Activated CD8-positive, alpha-beta memory T cell treated with anti-CD3 and anti-CD28 coated beads, Interleukin-2, amount 10 ng/mL, durations not matched to agents 7 days and 5 days (primary cell): ENCODE measurements at regions of chr5 and their contacts with region 1.

Region 1: DNA sequence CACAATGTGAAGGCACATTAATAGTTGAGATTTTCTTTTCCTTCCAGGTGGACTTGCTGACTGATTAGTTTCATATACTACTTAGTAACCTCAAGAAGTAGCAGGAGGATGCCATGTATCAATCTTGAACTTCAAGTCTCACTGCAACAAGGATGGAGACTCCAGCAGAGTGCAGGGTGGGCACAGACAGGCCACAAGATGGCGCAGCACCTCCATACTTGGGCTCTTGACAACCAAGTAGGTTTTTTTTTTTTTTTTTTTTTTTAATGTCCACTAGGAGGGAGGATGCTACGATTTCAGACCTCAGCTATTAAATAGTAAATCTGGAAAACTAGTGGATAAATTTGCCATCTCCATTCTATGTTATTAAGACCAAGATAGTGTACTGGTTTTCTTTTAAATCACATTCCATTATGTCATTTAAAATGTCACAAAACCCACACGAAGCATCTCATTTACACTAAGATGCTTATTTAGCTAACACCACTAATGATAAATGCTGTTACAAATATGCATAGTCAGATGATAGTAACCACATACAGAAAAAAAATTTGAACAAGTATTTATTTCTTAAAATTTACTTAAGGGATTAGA is 58.6 kb downstream of the IL6ST start:
- DNase-seq: peak; percentile 87
- ATAC-seq: peak; percentile 84
- H3K4me3 Mint-ChIP-seq: no peak overlapping the region
- H3K27ac Mint-ChIP-seq: no peak overlapping the region
- H3K4me1 Mint-ChIP-seq: no peaks in the 10 kb centered on the region
- H3K27me3 Mint-ChIP-seq: no peaks in the 10 kb centered on the region

Region 2: GRCh38 chr5:56200856-56201666 is 264.9 kb after region 1 on chr5:
- CTCF ChIA-PET with region 1: interaction called, 40 read pairs
- DNase-seq: peak; percentile 62
- ATAC-seq: peak; percentile 80
- H3K4me3 Mint-ChIP-seq: no peak overlapping the region
- H3K27ac Mint-ChIP-seq: no peak overlapping the region
- H3K4me1 Mint-ChIP-seq: no peaks in the 10 kb centered on the region
- H3K27me3 Mint-ChIP-seq: no peaks in the 10 kb centered on the region

Region 3: GRCh38 chr5:56270568-56271392 is 334.6 kb after region 1 on chr5:
- CTCF ChIA-PET with region 1: interaction called, 22 read pairs
- DNase-seq: peak; percentile 79
- ATAC-seq: peak; percentile 99
- H3K4me3 Mint-ChIP-seq: no peak overlapping the region
- H3K27ac Mint-ChIP-seq: no peak overlapping the region
- H3K4me1 Mint-ChIP-seq: peaks cover 16% of the 10 kb centered on the region
- H3K27me3 Mint-ChIP-seq: peaks cover 19% of the 10 kb centered on the region